Posterior vena cava (tissue), 2 donors: ENCODE measurements at regions of chr15 and their contacts with region 1.

Region 1: GRCh38 chr15:99954361-99955180 is 221.3 kb upstream of the LYSMD4 start:
- DNase-seq: no peak

Region 2: DNA sequence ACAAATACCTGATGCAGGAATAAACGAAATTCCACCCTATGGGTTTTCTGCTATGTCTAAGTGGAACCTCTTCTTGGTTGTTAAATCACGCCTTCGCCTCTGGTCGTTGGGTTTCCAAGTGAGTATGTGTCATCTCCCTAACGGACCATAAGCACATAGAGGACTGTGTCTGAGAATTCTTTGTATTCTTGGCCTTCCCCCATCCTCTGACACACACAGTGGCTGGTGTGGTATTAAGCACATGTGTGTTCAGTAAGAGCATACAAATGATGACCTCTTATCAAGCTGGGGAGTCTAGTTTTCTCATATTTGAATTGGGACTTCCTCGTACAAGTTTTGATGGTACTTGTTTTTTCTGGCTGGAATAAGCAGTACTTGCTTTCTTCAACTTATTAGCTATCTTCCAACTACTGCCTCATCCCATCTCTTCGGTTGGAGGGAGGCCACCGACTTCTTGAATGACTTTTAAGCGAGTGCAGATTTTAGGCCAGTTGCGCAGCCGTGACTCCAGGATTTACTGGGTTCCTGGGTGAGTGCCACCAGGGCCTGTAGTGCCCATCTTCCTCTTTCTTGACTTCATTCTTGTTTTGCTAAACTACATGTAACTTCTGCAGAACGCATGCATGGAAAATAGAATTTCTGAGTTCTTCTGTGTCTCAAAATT is 147.0 kb after region 1 on chr15:
- intact Hi-C with region 1: no loop called
- DNase-seq: peak; percentile 82

Region 3: DNA sequence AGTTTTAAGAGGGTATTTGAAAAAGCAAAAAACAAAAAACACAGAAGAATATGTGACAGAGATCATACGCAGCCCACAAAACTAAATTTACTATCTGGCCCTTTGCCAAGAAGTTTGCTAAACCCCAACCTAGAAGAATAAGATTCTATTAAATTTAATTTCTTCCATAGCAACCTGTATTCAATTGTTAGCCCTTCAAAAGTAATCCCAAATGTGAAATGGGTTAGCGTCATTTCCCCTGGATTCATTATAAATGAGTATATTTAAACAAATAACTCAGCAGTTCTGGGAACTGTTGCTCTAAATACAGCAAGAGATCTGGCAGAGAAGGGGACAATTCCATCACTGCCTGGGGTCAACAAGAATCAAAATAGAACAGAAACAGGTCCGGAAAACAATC is 517.4 kb after region 1 on chr15:
- intact Hi-C with region 1: loop called in 1 of 2 experiments (anchors 10 kb)
- DNase-seq: no peak